Activated CD4-positive, alpha-beta memory T cell treated with anti-CD3 and anti-CD28 coated beads, Interleukin-2, amount 10 ng/mL, durations not matched to agents 7 days and 5 days (primary cell): ENCODE measurements at regions of chr17 and their contacts with region 1.

Region 1: DNA sequence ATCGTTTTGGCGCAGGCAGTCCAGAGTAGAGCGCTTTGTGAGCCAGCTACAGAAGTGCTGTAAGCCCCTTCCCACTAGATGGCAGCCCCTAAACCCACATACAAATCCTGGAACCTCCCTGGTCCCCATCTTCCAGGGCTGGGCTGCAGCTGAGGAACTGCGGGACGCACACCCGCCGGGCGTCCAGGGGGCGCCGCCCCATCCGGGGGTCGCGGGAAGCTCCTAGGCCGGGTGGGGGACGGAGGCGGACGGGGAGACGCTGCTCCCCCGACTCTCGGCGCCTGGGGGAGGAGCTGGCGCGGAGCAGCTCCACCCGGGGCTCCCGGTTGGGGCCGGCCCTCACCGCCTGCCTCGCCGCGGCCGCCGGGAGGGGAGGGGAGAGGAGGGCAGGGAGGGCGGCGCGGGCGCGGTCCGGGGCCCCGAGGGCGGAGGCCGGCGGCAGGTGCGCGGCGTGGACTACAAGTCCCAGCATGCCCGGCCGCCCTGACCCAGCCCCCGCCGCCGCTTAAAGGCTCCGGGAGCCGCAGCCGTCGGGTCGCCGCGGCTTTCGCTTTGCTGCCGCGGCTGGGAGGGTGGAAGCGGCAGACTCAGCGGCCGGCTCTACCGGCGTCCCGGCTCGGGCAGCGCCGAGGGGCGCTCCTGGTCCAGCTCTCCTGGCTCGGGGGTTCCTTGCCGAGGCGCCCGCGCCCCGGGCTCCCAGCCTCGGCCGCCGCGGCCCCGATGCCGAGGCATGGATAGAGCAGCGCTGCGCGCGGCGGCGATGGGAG is at the start of gene KSR1:
- DNase-seq: peak; percentile 86
- H3K4me3 Mint-ChIP-seq: peak within 1 kb of the TSS; percentile 94
- H3K27ac Mint-ChIP-seq: peak within 1 kb of the TSS; percentile 62
- H3K4me1 Mint-ChIP-seq: peaks cover 44% of the 10 kb centered on the region
- H3K27me3 Mint-ChIP-seq: peaks cover 6% of the 10 kb centered on the region
- total RNA-seq, gene KSR1: 44.4 to 47.6 TPM

Region 2: GRCh38 chr17:27466743-27467375 is 10.8 kb after region 1 on chr17:
- CTCF ChIA-PET with region 1: interaction called, 14 read pairs
- POLR2A ChIA-PET with region 1: interaction called, 89 read pairs
- DNase-seq: peak; percentile 85
- H3K4me3 Mint-ChIP-seq: peak overlapping the region; percentile 61
- H3K27ac Mint-ChIP-seq: peak overlapping the region; percentile 89
- H3K4me1 Mint-ChIP-seq: peaks cover 86% of the 10 kb centered on the region
- H3K27me3 Mint-ChIP-seq: no peaks in the 10 kb centered on the region

Region 3: DNA sequence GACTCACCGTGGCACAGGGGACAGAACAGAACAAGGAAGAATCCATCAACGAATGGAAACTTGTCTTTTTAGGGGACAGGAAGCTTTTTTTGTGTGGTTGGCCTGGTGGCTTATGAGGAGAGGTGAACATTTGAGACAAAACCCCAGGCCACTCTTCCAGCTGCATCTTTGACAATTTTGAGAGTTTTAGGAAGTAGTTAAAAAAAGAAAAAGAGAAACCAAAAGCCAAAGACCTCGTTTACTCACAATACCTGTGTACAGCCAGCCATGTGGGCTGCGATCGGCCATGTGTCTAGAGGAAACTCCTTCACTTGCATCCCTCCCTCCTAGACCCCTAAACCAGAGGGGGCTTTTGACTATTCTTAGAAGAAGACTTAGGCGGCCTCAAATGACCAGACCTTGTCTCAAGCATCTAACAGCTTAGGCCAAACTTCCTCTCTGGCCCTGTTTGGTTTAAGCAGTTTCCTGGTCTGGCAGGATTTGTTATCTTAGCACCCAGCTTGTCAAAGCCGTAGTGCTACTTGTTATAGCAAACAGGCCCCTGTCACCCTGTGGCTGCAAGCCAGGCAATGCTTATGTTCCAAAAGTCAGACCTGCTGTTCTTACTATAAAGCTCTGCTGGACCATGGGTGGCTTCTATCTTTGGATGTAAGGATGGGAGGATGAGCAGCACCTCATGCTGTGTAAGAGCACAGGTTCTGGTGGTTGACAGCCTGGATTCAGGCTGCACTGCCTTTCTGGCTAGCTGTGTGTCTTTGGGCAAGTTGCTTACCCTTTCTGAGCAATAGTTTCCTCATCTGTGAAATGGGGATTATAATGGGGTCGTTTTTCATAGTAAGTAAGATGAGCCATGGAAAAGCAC is 17.9 kb after region 1 on chr17:
- CTCF ChIA-PET with region 1: interaction called, 14 read pairs
- POLR2A ChIA-PET with region 1: interaction called, 89 read pairs
- DNase-seq: peak; percentile 83
- H3K4me3 Mint-ChIP-seq: peak overlapping the region; percentile 61
- H3K27ac Mint-ChIP-seq: peak overlapping the region; percentile 98
- H3K4me1 Mint-ChIP-seq: peaks cover 87% of the 10 kb centered on the region
- H3K27me3 Mint-ChIP-seq: no peaks in the 10 kb centered on the region

Region 4: GRCh38 chr17:27494192-27495091 is 38.3 kb after region 1 on chr17:
- CTCF ChIA-PET with region 1: no interaction called
- POLR2A ChIA-PET with region 1: no interaction called
- DNase-seq: no peak
- H3K4me3 Mint-ChIP-seq: no peak overlapping the region
- H3K27ac Mint-ChIP-seq: no peak overlapping the region
- H3K4me1 Mint-ChIP-seq: peaks cover 5% of the 10 kb centered on the region
- H3K27me3 Mint-ChIP-seq: no peaks in the 10 kb centered on the region

Region 5: GRCh38 chr17:27544350-27545131 is 88.4 kb after region 1 on chr17:
- CTCF ChIA-PET with region 1: interaction called, 10 read pairs
- POLR2A ChIA-PET with region 1: interaction called, 13 read pairs
- DNase-seq: peak; percentile 80
- H3K4me3 Mint-ChIP-seq: peak overlapping the region; percentile 54
- H3K27ac Mint-ChIP-seq: peak overlapping the region; percentile 76
- H3K4me1 Mint-ChIP-seq: peaks cover 78% of the 10 kb centered on the region
- H3K27me3 Mint-ChIP-seq: no peaks in the 10 kb centered on the region